ENCODE measurements at regions of chr20 and their contacts with region 1.

Region 1: GRCh38 chr20:47610247-47610944 is 108.7 kb downstream of the NCOA3 start:
- DNase-seq: peak; percentile 33
- ATAC-seq: peak; percentile 94
- H3K4me3 ChIP-seq: no peak overlapping the region
- H3K27ac ChIP-seq: peak overlapping the region; percentile 18; the same call in 1 of the 2 replicates
- H3K4me1 ChIP-seq: peaks cover 6% of the 10 kb centered on the region
- H3K27me3 ChIP-seq: no peaks in the 10 kb centered on the region
- CTCF ChIP-seq: no peak
- EP300 ChIP-seq: no peak
- POLR2A ChIP-seq: no peak
- RAD21 ChIP-seq: no peak

Region 2: GRCh38 chr20:47540443-47541354 is 69.7 kb before region 1 on chr20:
- CTCF ChIA-PET with region 1: no interaction called
- POLR2A ChIA-PET with region 1: no interaction called
- RAD21 ChIA-PET with region 1: interaction called, 5 read pairs
- SMC1A ChIA-PET with region 1: interaction called, 10 read pairs
- in situ Hi-C with region 1: no loop called
- intact Hi-C with region 1: no loop called
- DNase-seq: peak; percentile 21
- ATAC-seq: peak; percentile 22; the same call in 2 of the 3 replicates
- H3K4me3 ChIP-seq: no peak overlapping the region
- H3K27ac ChIP-seq: no peak overlapping the region
- H3K4me1 ChIP-seq: peaks cover 35% of the 10 kb centered on the region
- H3K27me3 ChIP-seq: no peaks in the 10 kb centered on the region
- CTCF ChIP-seq: no peak
- EP300 ChIP-seq: no peak
- POLR2A ChIP-seq: no peak
- RAD21 ChIP-seq: no peak

Region 3: DNA sequence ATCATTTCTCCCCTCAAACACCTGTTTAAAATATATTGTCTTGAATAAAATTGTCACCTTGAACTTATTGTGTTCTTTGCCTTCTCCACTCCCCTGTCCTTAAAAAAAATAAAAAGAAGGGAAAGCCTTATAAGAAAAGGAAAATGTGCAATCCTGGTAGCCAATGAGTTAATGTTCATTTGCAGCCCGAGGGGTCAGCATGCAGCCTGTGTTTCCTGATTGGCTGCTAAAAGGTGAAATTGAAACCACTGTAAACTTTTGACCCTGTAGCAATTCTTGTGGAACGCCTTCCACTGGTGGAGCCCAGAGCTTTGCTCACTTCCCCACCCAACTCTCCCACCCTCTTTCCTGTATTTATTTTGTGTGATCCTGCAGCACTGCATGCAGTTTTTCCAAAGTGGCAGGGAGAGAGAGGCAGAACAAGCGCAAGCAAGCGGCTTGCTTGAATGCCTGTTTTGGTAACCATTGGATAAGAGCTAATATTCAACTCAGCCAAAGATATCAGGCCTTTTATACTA is 33.8 kb before region 1 on chr20:
- CTCF ChIA-PET with region 1: interaction called, 3 read pairs
- POLR2A ChIA-PET with region 1: interaction called, 6 read pairs
- RAD21 ChIA-PET with region 1: interaction called, 3 read pairs
- SMC1A ChIA-PET with region 1: interaction called, 15 read pairs
- in situ Hi-C with region 1: no loop called
- intact Hi-C with region 1: no loop called
- DNase-seq: peak; percentile 46
- ATAC-seq: peak; percentile 85
- H3K4me3 ChIP-seq: peak overlapping the region; percentile 45
- H3K27ac ChIP-seq: peak overlapping the region; percentile 74
- H3K4me1 ChIP-seq: peaks cover 52% of the 10 kb centered on the region
- H3K27me3 ChIP-seq: no peaks in the 10 kb centered on the region
- CTCF ChIP-seq: no peak
- EP300 ChIP-seq: no peak
- POLR2A ChIP-seq: no peak
- RAD21 ChIP-seq: no peak

Region 4: DNA sequence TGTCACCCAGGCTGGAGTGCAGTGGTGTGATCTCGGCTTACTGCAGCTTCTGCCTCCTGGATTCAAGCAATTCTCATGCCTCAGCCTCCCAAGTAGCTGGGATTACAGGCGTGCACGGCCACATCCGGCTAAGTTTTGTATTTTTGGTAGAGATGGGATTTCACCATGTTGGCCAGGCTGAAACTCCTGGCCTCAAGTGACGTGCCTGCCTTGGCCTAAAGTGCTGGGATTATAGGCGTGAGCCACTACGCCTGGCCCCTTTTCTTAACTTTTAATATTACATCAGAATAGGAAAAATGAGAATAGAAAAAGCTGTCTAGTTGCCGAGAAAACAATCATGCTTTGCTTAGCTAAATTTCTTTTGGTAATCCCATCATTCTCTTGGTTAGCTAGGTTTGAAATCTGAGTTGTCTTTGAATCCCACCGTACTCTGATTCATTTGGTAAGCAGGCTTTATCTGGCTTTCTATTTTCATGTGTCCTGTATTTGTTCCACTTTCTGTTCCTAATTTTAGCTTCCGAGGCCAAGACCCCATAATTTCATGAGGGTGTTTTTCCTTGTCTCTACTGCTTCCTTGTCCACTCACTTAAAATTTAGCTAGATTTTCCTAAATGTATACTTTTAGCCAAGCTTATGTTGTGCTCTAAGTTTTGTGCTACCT is 25.2 kb before region 1 on chr20:
- CTCF ChIA-PET with region 1: interaction called, 3 read pairs
- POLR2A ChIA-PET with region 1: interaction called, 4 read pairs
- RAD21 ChIA-PET with region 1: no interaction called
- SMC1A ChIA-PET with region 1: interaction called, 10 read pairs
- in situ Hi-C with region 1: no loop called
- intact Hi-C with region 1: no loop called
- DNase-seq: no peak
- ATAC-seq: peak; percentile 57
- H3K4me3 ChIP-seq: no peak overlapping the region
- H3K27ac ChIP-seq: peak overlapping the region; percentile 45
- H3K4me1 ChIP-seq: peaks cover 26% of the 10 kb centered on the region
- H3K27me3 ChIP-seq: no peaks in the 10 kb centered on the region
- CTCF ChIP-seq: no peak
- EP300 ChIP-seq: no peak
- POLR2A ChIP-seq: no peak
- RAD21 ChIP-seq: no peak

Measured in GM12878 (cell line).